OCI-LY7 (cell line): ENCODE measurements at regions of chr16 and their contacts with region 1.

Region 1: GRCh38 chr16:66977341-66978113 is 10.9 kb upstream of the CES4A start:
- DNase-seq: peak; percentile 88
- H3K4me3 ChIP-seq: no peak overlapping the region
- H3K27ac ChIP-seq: no peak overlapping the region
- H3K4me1 ChIP-seq: no peaks in the 10 kb centered on the region
- CTCF ChIP-seq: peak; percentile 94

Region 2: GRCh38 chr16:66660422-66661209 is 316.9 kb before region 1 on chr16:
- CTCF ChIA-PET with region 1: no interaction called
- POLR2A ChIA-PET with region 1: no interaction called
- intact Hi-C with region 1: no loop called
- DNase-seq: no peak
- H3K4me3 ChIP-seq: no peak overlapping the region
- H3K27ac ChIP-seq: no peak overlapping the region
- H3K4me1 ChIP-seq: no peaks in the 10 kb centered on the region
- CTCF ChIP-seq: no peak

Region 3: DNA sequence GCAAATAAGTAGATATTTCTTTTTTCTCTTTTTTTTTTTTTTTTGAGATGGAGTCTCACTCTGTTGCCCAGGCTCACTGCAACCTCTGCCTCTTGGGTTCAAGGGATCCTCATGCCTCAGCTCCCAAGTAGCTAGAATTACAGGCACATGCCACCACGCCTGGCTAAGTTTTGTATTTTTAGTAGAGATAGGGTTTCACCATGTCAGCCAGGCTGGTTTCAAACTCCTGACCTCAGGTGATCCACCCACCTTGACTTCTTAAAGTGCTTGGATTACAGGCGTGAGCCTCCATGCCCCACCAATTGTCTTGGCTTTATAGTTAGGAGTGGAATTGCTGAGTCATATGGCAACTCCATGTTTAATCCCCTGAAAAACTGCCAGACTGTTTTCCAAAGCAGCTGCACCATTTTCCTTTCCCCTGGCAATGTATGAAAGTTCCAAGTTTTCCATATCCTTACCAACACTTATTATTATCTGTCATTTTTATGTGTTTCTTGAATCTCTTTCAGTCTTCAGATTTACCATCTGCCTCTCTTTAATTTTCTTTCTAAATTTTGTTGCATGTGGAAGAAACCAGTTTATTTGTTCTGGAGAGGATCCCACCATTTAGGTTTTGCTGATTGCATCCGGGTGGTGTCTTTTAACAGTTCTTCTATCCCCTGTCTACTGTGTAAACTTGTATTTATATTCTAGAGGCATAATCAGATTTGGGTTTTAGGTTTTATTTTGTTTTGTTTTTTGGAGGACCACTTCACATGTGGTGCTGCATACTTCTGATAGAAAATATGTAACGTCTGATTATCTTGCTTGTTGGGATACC is 26.3 kb before region 1 on chr16:
- CTCF ChIA-PET with region 1: no interaction called
- POLR2A ChIA-PET with region 1: no interaction called
- intact Hi-C with region 1: no loop called
- DNase-seq: no peak
- H3K4me3 ChIP-seq: no peak overlapping the region
- H3K27ac ChIP-seq: no peak overlapping the region
- H3K4me1 ChIP-seq: peaks cover 5% of the 10 kb centered on the region
- CTCF ChIP-seq: no peak

Region 4: GRCh38 chr16:67100569-67101310 is 123.2 kb after region 1 on chr16:
- CTCF ChIA-PET with region 1: no interaction called
- POLR2A ChIA-PET with region 1: no interaction called
- intact Hi-C with region 1: loop called (anchors 1 kb)
- DNase-seq: peak; percentile 44
- H3K4me3 ChIP-seq: no peak overlapping the region
- H3K27ac ChIP-seq: no peak overlapping the region
- H3K4me1 ChIP-seq: no peaks in the 10 kb centered on the region
- CTCF ChIP-seq: peak; percentile 80

Region 5: DNA sequence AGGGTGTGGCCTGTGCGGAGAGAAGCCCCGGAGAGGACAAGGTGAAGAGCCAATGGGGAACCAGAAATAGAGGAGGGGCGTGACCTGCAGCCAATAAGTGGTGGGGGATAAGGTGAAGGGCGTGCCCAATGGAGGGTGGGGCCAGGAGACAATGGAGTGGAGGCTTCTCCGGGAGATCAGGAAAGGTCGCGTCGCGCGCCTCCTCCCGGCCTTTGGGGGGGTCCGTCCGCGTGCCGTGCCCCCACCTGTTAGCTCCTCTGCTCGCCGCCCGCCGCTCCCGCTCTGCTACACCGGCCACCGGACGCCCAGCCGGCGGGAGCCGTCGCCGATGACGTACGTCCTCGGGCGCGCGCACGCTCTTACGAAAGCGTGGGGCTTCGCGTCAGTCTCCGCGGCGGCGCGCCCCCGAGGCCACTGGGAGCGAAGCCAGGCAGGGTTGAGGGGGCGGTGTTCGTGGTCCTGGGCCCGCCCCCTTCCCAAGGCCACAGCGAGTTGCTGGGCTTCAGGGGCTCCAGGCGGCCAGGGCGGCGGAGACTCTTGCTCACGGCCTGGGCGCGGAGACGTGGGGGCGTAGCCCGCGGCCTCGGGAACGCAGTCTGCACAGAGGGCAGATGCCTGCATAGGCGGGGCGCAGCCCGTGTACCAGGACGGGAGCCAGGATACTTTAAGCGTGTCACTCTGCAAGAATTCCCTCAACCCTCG is 206.3 kb after region 1 on chr16 and contains the start of gene MATCAP1:
- CTCF ChIA-PET with region 1: no interaction called
- POLR2A ChIA-PET with region 1: interaction called, 4 read pairs
- intact Hi-C with region 1: loop called (anchors 1 kb)
- DNase-seq: peak; percentile 97
- H3K4me3 ChIP-seq: peak within 1 kb of the TSS; percentile 79
- H3K27ac ChIP-seq: peak within 1 kb of the TSS; percentile 56
- H3K4me1 ChIP-seq: peaks cover 14% of the 10 kb centered on the region
- CTCF ChIP-seq: no peak
- total RNA-seq, gene MATCAP1: 18.0 and 22.9 TPM in 2 replicates